H1 (cell line): ENCODE measurements at regions of chr2 and their contacts with region 1.

Region 1: DNA sequence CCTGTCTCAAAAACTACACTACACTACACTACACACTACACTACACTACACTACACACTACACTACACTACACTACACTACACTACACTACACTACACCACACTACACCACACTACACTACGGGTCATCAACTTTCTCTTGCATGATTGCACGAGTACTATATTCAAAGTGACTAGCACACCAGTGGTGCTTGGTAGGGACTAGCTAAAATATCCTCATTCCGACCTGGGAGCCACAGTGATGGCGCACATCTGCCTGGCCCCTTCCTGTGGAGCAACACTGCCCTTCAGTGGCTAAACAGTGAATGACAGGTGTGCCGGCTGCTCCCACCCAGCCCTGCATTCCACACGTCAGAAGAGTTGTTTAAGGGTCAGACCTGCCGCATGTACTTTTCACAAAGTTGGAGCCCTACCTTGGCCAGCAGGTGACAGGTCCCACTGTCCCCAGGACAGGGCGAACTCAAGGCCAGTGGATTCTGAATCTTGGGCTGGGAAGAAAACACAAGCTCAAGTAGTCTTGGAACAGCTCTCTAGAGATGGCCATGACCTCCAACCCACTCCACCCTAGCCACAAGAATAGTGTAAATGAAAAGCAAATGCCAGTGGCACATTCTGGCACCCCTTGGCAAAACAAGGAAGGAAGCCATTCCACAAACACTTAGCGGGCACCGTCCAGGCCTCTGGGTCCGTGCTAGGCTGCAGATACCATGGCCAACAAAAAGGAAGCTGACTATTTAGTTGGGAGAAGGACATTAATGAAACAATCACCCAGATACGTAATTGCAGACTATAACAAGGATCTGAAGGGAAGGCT is 79.7 kb upstream of the MSH2 start:
- DNase-seq: peak; percentile 72 to 94
- H3K4me3 ChIP-seq: no peak overlapping the region
- H3K27ac ChIP-seq: no peak overlapping the region
- H3K4me1 ChIP-seq: peaks cover 0 to 5% (median under 1%) of the 10 kb centered on the region in 4 experiments; a peak in 1 of 7 replicates
- H3K27me3 ChIP-seq: no peaks in the 10 kb centered on the region
- CTCF ChIP-seq: peak; percentile 97 to 100 (median 97)
- EP300 ChIP-seq: no peak
- POLR2A ChIP-seq: no peak; a peak in 1 of 3 replicates
- RAD21 ChIP-seq: peak; percentile 100

Region 2: DNA sequence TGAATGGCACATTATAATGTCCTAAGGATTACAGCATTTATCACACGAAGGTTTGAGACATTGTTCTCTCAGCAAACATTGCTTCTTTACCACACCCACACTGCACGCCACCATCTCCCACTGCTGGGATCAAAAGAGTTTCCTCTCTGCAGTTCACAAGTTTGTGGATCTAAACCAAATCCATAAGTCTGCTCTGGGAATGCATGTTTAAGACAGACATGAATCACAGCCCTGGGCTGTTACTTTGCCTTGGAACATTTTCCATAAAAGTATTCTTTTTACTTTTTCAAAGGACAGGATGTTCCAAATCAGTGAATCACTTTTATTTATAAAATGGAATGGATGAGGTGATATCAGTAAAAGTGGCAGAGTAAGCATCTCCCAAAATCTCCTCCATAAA is 204.2 kb before region 1 on chr2:
- CTCF ChIA-PET with region 1: interaction called, 11 read pairs
- POLR2A ChIA-PET with region 1: no interaction called
- DNase-seq: no peak
- H3K4me3 ChIP-seq: no peak overlapping the region
- H3K27ac ChIP-seq: no peak overlapping the region
- H3K4me1 ChIP-seq: no peaks in the 10 kb centered on the region
- H3K27me3 ChIP-seq: no peaks in the 10 kb centered on the region
- CTCF ChIP-seq: no peak
- EP300 ChIP-seq: no peak
- POLR2A ChIP-seq: no peak
- RAD21 ChIP-seq: no peak

Region 3: GRCh38 chr2:47174733-47175361 is 148.4 kb before region 1 on chr2:
- CTCF ChIA-PET with region 1: interaction called, 16 read pairs
- POLR2A ChIA-PET with region 1: interaction called, 4 read pairs
- DNase-seq: no peak
- H3K4me3 ChIP-seq: peak overlapping the region; percentile 82 to 97 (median 88)
- H3K27ac ChIP-seq: no peak overlapping the region
- H3K4me1 ChIP-seq: peaks cover 6 to 24% (median 19%) of the 10 kb centered on the region in 4 experiments; a peak in 6 of 7 replicates
- H3K27me3 ChIP-seq: no peaks in the 10 kb centered on the region
- CTCF ChIP-seq: no peak
- EP300 ChIP-seq: no peak
- POLR2A ChIP-seq: peak in 1 of 2 experiments; percentile 51; a peak in 1 of 3 replicates
- RAD21 ChIP-seq: 0 out of 4 replicates have a peak, but pooled peaks of 1 of the 2 experiments have one; percentile 1

Region 4: GRCh38 chr2:47265751-47266231 is 57.4 kb before region 1 on chr2:
- CTCF ChIA-PET with region 1: interaction called, 58 read pairs
- POLR2A ChIA-PET with region 1: no interaction called
- DNase-seq: no peak
- H3K4me3 ChIP-seq: no peak overlapping the region
- H3K27ac ChIP-seq: no peak overlapping the region
- H3K4me1 ChIP-seq: peaks cover 10 to 21% (median 14%) of the 10 kb centered on the region in 4 experiments
- H3K27me3 ChIP-seq: no peaks in the 10 kb centered on the region
- CTCF ChIP-seq: no peak
- EP300 ChIP-seq: no peak
- POLR2A ChIP-seq: no peak
- RAD21 ChIP-seq: no peak

Region 5: DNA sequence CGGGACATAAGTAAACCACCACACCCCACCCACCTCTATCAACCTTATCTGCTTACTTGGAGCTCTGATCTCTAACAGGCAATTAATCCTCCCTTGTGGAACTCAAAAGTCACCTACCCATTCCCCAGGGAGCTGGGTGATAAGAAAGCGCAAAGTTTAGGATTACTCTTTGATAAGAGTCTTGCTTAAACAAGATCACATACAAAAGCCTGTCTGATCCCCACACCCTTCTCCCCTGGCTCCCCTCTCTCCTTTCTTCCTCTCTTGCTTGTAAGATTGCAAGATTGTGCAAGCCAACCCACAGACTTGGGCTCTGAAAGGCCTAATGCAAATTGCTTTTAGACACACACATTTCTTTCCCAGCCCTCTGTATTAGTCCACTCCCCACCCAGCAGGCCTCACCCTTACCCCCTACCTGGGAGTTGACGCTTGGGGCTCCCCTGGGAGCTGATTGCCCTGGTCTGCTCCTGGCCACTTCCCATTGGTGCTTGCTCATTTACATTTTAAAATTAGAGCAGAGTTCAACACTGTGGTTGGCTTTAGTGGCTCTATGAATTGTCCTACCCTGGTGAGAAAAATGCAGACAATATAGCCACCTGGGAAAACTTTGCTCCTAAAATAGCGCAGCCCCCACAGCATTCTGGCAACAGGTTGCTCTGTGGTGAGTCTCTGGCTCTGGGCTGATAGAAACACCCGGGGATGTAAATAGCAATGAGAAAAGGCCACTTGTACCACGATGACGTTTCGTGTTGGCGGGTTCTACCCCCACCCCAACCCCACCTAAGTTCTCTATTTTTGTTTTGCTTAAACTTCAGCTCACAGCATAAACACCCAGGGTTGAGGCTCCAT is 13.0 kb before region 1 on chr2:
- CTCF ChIA-PET with region 1: interaction called, 164 read pairs
- POLR2A ChIA-PET with region 1: interaction called, 6 read pairs
- DNase-seq: no peak
- H3K4me3 ChIP-seq: no peak overlapping the region
- H3K27ac ChIP-seq: no peak overlapping the region
- H3K4me1 ChIP-seq: peaks cover 0 to 13% (median 10%) of the 10 kb centered on the region in 4 experiments; a peak in 6 of 7 replicates
- H3K27me3 ChIP-seq: no peaks in the 10 kb centered on the region
- CTCF ChIP-seq: no peak
- EP300 ChIP-seq: no peak
- POLR2A ChIP-seq: no peak
- RAD21 ChIP-seq: no peak

Region 6: GRCh38 chr2:47373747-47374146 is 50.5 kb after region 1 on chr2:
- CTCF ChIA-PET with region 1: interaction called, 14 read pairs
- POLR2A ChIA-PET with region 1: no interaction called
- DNase-seq: no peak
- H3K4me3 ChIP-seq: no peak overlapping the region
- H3K27ac ChIP-seq: no peak overlapping the region
- H3K4me1 ChIP-seq: peaks cover 0 to 3% (median 0%) of the 10 kb centered on the region in 4 experiments; a peak in 1 of 7 replicates
- H3K27me3 ChIP-seq: peaks cover 0 to 6% (median 2%) of the 10 kb centered on the region in 4 experiments; a peak in 2 of 7 replicates
- CTCF ChIP-seq: peak; percentile 62 to 70 (median 63)
- EP300 ChIP-seq: no peak
- POLR2A ChIP-seq: no peak
- RAD21 ChIP-seq: peak; percentile 84 to 88

Region 7: GRCh38 chr2:47876912-47877311 is 553.7 kb after region 1 on chr2:
- CTCF ChIA-PET with region 1: no interaction called
- POLR2A ChIA-PET with region 1: no interaction called
- DNase-seq: no peak
- H3K4me3 ChIP-seq: no peak overlapping the region
- H3K27ac ChIP-seq: no peak overlapping the region
- H3K4me1 ChIP-seq: peaks cover 0 to 6% (median 4%) of the 10 kb centered on the region in 4 experiments; a peak in 4 of 7 replicates
- H3K27me3 ChIP-seq: no peaks in the 10 kb centered on the region
- CTCF ChIP-seq: no peak
- EP300 ChIP-seq: no peak
- POLR2A ChIP-seq: no peak
- RAD21 ChIP-seq: no peak